CD8-positive, alpha-beta T cell (primary cell): ENCODE measurements at regions of chr22 and their contacts with region 1.

Region 1: DNA sequence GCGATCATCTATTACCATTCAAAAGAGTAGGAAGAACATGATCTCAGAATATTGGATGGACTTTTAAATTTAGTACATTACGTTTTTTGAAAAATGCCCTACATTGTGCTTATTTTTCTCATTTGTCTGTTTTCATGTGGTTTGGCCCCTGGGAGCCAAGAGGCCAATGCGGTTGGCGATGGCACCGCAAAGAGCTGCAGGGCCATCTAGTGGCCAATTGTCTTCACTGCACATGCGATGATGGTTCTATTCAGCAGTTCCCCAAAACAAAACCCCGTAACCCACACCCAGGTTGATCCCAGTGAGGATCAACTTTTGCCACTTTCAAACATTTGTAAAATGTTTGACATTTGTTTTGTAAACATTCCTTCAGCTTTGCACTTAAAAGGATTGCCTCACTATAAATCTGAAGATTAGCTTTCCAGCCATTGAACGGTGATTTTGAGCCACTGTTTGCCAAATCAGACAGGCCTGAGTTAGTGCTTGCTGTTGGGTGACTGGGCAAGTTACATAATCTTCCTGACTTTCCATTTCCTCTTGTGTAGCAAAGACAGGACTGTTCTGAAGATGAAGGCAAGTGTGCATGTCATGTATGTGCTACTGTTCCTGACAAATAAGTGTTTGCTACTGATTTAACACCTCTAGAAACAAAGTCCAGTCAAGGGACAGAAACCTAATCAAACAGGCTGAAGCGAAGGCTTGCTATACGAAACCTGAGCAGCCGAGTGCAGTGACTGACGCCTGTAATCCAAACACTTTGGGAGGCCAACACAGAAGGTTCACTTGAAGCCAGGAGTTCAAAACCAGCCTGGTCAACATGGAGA is 29.2 kb upstream of the XBP1 start:
- DNase-seq: peak; percentile 52 to 87 (median 75)
- ATAC-seq: peak; percentile 83
- H3K4me3 ChIP-seq: no peak overlapping the region
- H3K4me3 Mint-ChIP-seq: no peak overlapping the region
- H3K27ac ChIP-seq: no peak overlapping the region
- H3K27ac Mint-ChIP-seq: no peak overlapping the region
- H3K4me1 ChIP-seq: peaks cover 10% of the 10 kb centered on the region
- H3K4me1 Mint-ChIP-seq: peaks cover 14% of the 10 kb centered on the region
- H3K27me3 ChIP-seq: no peaks in the 10 kb centered on the region
- H3K27me3 Mint-ChIP-seq: no peaks in the 10 kb centered on the region
- CTCF ChIP-seq: peak; percentile 99

Region 2: DNA sequence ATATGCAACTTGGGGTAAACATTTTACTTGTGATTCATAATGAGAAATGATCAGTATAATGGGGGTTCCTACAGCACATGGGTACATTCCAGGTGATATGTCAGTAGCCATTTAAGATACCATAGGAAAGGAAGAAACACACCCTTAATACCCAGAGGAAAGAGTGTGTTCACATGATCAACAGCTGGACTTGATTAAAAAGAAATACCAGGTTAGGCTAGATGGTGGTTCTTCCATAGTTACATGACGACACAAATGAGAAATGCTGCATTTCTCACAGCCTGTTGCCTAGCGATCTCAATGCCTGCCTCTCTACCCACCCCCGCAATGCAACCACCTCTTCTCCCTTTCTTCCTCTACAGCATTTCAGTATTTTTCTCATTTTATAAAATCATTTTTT is 246.8 kb before region 1 on chr22:
- CTCF ChIA-PET with region 1: no interaction called
- POLR2A ChIA-PET with region 1: no interaction called
- intact Hi-C with region 1: no loop called
- DNase-seq: no peak
- ATAC-seq: no peak
- H3K4me3 ChIP-seq: no peak overlapping the region
- H3K4me3 Mint-ChIP-seq: no peak overlapping the region
- H3K27ac ChIP-seq: no peak overlapping the region
- H3K27ac Mint-ChIP-seq: no peak overlapping the region
- H3K4me1 ChIP-seq: no peaks in the 10 kb centered on the region
- H3K4me1 Mint-ChIP-seq: no peaks in the 10 kb centered on the region
- H3K27me3 ChIP-seq: peaks cover 0 to 6% of the 10 kb centered on the region in 2 experiments
- H3K27me3 Mint-ChIP-seq: peaks cover 17% of the 10 kb centered on the region
- CTCF ChIP-seq: no peak

Region 3: DNA sequence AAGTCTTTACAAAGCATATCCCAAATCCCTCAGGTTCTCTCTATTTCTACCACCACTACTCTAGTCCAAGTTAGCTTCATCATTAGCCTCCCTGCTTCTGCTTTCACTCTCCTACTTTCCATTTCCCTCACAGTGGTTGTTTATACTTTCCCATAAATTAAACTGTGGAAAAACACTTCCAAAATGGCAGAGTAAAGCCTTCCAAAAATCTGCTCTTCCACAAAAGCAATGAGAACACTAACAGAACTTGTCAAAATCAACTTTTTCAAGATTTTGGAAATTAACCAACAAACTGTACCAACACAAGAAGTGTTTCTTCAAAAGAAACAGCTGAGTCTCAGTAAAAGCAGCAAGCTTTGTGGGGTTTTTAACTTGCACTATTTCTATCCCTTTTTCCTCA is 221.8 kb before region 1 on chr22:
- CTCF ChIA-PET with region 1: interaction called, 17 read pairs
- POLR2A ChIA-PET with region 1: no interaction called
- intact Hi-C with region 1: no loop called
- DNase-seq: no peak
- ATAC-seq: no peak
- H3K4me3 ChIP-seq: no peak overlapping the region
- H3K4me3 Mint-ChIP-seq: no peak overlapping the region
- H3K27ac ChIP-seq: no peak overlapping the region
- H3K27ac Mint-ChIP-seq: no peak overlapping the region
- H3K4me1 ChIP-seq: no peaks in the 10 kb centered on the region
- H3K4me1 Mint-ChIP-seq: no peaks in the 10 kb centered on the region
- H3K27me3 ChIP-seq: peaks cover 0 to 4% of the 10 kb centered on the region in 2 experiments
- H3K27me3 Mint-ChIP-seq: peaks cover 46% of the 10 kb centered on the region
- CTCF ChIP-seq: no peak

Region 4: GRCh38 chr22:28759861-28760560 is 69.6 kb before region 1 on chr22:
- CTCF ChIA-PET with region 1: no interaction called
- POLR2A ChIA-PET with region 1: no interaction called
- intact Hi-C with region 1: no loop called
- DNase-seq: no peak
- ATAC-seq: no peak
- H3K4me3 ChIP-seq: no peak overlapping the region
- H3K4me3 Mint-ChIP-seq: no peak overlapping the region
- H3K27ac ChIP-seq: no peak overlapping the region
- H3K27ac Mint-ChIP-seq: no peak overlapping the region
- H3K4me1 ChIP-seq: no peaks in the 10 kb centered on the region
- H3K4me1 Mint-ChIP-seq: no peaks in the 10 kb centered on the region
- H3K27me3 ChIP-seq: no peaks in the 10 kb centered on the region
- H3K27me3 Mint-ChIP-seq: peaks cover 2% of the 10 kb centered on the region
- CTCF ChIP-seq: no peak

Region 5: DNA sequence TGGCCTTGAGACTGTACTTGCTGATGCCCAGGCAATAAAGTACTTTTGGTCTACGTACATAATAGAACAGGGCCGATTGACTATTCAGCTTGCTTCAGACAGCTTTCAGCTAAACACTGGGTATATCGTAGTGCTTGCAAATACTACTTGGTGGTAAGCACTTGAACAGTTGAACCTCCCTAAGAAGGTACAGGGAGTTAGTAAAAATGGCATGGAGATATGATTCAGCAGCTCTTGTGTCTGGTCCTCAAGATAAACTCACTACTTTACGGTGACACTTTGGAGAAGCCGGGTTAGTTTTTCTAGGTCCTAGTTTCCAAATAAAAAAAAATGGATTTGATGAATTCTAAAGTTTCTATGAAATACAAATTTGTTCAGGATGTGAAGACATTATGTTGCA is 49.7 kb before region 1 on chr22:
- CTCF ChIA-PET with region 1: interaction called, 125 read pairs
- POLR2A ChIA-PET with region 1: no interaction called
- intact Hi-C with region 1: loop called in 1 of 2 experiments (anchors 10 kb)
- DNase-seq: no peak
- ATAC-seq: no peak
- H3K4me3 ChIP-seq: no peak overlapping the region
- H3K4me3 Mint-ChIP-seq: no peak overlapping the region
- H3K27ac ChIP-seq: no peak overlapping the region
- H3K27ac Mint-ChIP-seq: no peak overlapping the region
- H3K4me1 ChIP-seq: peaks cover 22% of the 10 kb centered on the region
- H3K4me1 Mint-ChIP-seq: peaks cover 33% of the 10 kb centered on the region
- H3K27me3 ChIP-seq: no peaks in the 10 kb centered on the region
- H3K27me3 Mint-ChIP-seq: no peaks in the 10 kb centered on the region
- CTCF ChIP-seq: no peak

Region 6: DNA sequence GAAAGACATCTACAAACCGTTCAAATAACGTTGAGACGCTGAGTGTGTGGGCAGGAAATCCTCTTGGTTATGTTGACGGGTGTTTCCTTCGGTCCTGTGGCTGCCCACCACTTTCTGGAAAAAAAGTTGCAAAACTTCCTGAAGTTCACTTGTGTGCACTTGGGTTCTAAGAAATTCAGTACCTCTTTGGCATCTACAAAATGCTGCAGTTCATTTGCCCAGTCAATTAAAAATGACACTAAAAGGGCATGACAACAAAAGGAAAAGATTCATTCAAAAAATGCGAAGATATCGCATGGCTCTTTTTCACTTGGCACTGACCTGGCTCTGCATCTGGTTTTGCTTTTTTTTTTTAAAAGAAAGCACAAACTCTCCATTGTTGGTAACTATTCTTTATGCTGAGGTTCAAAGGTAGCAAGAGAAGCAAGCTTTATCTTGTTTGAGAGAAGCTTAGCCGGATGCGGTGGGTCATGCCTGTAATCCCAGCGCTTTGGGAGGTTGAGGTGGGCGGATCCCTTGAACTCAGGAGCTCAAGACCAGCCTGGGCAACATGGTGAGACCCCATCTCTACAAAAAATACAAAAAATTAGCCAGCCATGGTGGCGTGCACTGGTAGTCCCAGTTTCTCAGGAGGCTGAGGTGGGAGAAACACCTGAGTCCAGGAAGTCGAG is 18.6 kb before region 1 on chr22:
- CTCF ChIA-PET with region 1: interaction called, 46 read pairs
- POLR2A ChIA-PET with region 1: interaction called, 14 read pairs
- intact Hi-C with region 1: loop called in 1 of 2 experiments (anchors 2 kb)
- DNase-seq: peak in 6 of 9 experiments; percentile 31 to 80 (median 52)
- ATAC-seq: peak; percentile 51
- H3K4me3 ChIP-seq: peak overlapping the region; percentile 25 to 46
- H3K4me3 Mint-ChIP-seq: peak overlapping the region; percentile 82
- H3K27ac ChIP-seq: peak overlapping the region; percentile 14 to 64
- H3K27ac Mint-ChIP-seq: peak overlapping the region; percentile 92
- H3K4me1 ChIP-seq: peaks cover 72% of the 10 kb centered on the region
- H3K4me1 Mint-ChIP-seq: peaks cover 76% of the 10 kb centered on the region
- H3K27me3 ChIP-seq: no peaks in the 10 kb centered on the region
- H3K27me3 Mint-ChIP-seq: no peaks in the 10 kb centered on the region
- CTCF ChIP-seq: no peak

Region 7: GRCh38 chr22:28855355-28856094 is 26.0 kb after region 1 on chr22:
- CTCF ChIA-PET with region 1: interaction called, 12 read pairs
- POLR2A ChIA-PET with region 1: no interaction called
- intact Hi-C with region 1: no loop called
- DNase-seq: peak; percentile 4 to 76 (median 37)
- ATAC-seq: peak; percentile 59
- H3K4me3 ChIP-seq: no peak overlapping the region
- H3K4me3 Mint-ChIP-seq: no peak overlapping the region
- H3K27ac ChIP-seq: no peak overlapping the region
- H3K27ac Mint-ChIP-seq: no peak overlapping the region
- H3K4me1 ChIP-seq: no peaks in the 10 kb centered on the region
- H3K4me1 Mint-ChIP-seq: no peaks in the 10 kb centered on the region
- H3K27me3 ChIP-seq: no peaks in the 10 kb centered on the region
- H3K27me3 Mint-ChIP-seq: peaks cover 9% of the 10 kb centered on the region
- CTCF ChIP-seq: peak; percentile 94